GM12878 (cell line): ENCODE measurements at regions of chr6 and their contacts with region 1.

Region 1: DNA sequence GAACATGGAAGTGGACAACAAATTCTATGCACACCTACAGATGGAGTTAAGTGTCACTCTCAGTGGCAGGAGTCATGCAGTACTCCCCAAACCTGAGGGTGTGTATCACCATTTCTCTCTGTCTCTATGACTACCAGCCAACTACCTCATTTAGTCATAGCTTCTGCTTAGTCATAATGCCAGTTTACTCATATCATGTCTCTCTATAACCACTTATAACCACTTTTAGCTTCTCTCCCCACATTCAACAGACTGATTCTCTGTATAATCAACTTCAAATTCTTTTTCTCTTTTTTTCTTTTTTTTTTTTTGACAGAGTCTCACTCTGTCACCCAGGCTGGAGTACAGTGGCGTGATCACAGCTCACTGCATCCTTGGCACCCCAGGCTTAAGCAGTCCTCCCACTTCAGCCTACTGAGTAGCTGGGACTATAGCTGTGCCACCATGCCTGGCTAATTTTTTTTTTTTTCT is 13.8 kb upstream of the GTF3C6 start:
- DNase-seq: peak; percentile 94
- ATAC-seq: peak; percentile 99
- H3K4me3 ChIP-seq: peak overlapping the region; percentile 9; the same call in 1 of the 2 replicates
- H3K27ac ChIP-seq: peak overlapping the region; percentile 22; the same call in 1 of the 2 replicates
- H3K4me1 ChIP-seq: peaks cover 10% of the 10 kb centered on the region
- H3K27me3 ChIP-seq: no peaks in the 10 kb centered on the region
- CTCF ChIP-seq: no peak
- EP300 ChIP-seq: peak; percentile 99
- POLR2A ChIP-seq: no peak
- RAD21 ChIP-seq: no peak

Region 2: DNA sequence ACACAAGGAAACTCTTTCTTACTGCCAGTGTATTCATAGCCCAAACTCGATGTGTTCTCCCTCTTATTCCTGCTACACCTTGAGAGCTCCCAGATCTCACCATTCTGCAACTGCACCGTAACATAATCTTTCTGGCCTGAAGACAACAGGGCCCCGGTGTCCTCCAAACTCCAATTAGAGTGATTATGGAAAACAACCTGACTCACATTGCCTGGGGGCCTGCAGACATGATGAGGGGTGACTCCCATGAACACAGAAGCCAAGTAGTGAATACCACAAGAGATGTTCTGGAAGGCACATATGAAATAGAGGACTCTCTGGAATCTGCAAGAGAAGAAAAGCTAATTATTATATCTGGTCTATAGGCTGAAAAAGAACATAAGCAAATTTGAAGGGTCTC is 488.0 kb before region 1 on chr6:
- CTCF ChIA-PET with region 1: interaction called, 4 read pairs
- POLR2A ChIA-PET with region 1: no interaction called
- RAD21 ChIA-PET with region 1: no interaction called
- SMC1A ChIA-PET with region 1: no interaction called
- in situ Hi-C with region 1: no loop called
- intact Hi-C with region 1: loop called (anchors 5 kb)
- DNase-seq: no peak
- ATAC-seq: no peak
- H3K4me3 ChIP-seq: no peak overlapping the region
- H3K27ac ChIP-seq: no peak overlapping the region
- H3K4me1 ChIP-seq: no peaks in the 10 kb centered on the region
- H3K27me3 ChIP-seq: no peaks in the 10 kb centered on the region; a peak in 1 of 4 replicates
- CTCF ChIP-seq: no peak
- EP300 ChIP-seq: no peak
- POLR2A ChIP-seq: no peak
- RAD21 ChIP-seq: no peak

Region 3: DNA sequence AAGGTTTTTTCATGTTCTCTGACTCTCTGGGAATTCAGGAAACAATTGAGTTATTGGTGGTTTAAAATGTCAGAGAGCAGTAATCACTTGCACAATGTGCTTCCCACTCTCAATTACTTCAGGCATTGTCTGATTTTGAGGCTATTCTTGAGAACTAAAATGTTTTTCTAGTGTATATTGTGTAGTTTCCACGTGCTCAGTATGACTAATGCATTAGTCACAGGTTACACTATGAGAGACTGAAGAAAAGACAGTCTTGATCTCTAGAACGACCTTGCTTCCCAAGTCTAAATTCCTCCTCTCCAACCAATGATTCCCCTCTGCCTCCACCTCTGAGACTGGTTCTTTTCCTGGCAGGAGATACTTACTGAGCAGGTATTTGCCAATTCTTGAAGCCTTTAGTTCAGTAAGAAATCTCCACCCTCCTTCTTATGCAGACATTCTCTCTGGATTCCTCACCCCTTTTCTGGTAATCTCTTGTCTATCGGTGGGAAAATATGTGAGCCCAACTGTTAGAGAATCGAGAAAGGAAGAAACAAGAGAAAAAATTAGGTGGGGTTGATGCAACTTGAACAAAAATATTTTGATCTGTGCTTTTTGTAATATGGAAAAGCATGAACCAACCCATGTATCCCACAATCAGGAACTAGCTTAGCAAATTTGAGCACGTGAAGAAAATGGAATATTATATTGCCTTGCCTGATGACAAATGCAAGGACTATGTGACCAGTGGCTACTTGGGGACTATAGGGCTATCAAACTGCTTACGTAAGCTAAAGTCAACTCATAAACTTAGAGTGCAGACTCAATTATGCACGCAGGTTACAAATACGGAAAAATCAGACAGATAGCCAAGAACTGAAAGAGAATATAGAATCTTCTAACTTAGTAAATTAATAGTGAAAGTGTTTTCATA is 407.2 kb before region 1 on chr6:
- CTCF ChIA-PET with region 1: interaction called, 3 read pairs
- POLR2A ChIA-PET with region 1: interaction called, 3 read pairs
- RAD21 ChIA-PET with region 1: no interaction called
- SMC1A ChIA-PET with region 1: interaction called, 3 read pairs
- in situ Hi-C with region 1: loop called (anchors 5 kb)
- intact Hi-C with region 1: no loop called
- DNase-seq: no peak
- ATAC-seq: peak; percentile 64
- H3K4me3 ChIP-seq: no peak overlapping the region
- H3K27ac ChIP-seq: no peak overlapping the region
- H3K4me1 ChIP-seq: no peaks in the 10 kb centered on the region
- H3K27me3 ChIP-seq: no peaks in the 10 kb centered on the region
- CTCF ChIP-seq: no peak
- EP300 ChIP-seq: no peak
- POLR2A ChIP-seq: no peak
- RAD21 ChIP-seq: no peak

Region 4: GRCh38 chr6:110618591-110619267 is 326.0 kb before region 1 on chr6:
- CTCF ChIA-PET with region 1: interaction called, 13 read pairs
- POLR2A ChIA-PET with region 1: no interaction called
- RAD21 ChIA-PET with region 1: no interaction called
- SMC1A ChIA-PET with region 1: interaction called, 6 read pairs
- in situ Hi-C with region 1: no loop called
- intact Hi-C with region 1: loop called (anchors 10 kb)
- DNase-seq: peak; percentile 11
- ATAC-seq: peak; percentile 71
- H3K4me3 ChIP-seq: no peak overlapping the region
- H3K27ac ChIP-seq: no peak overlapping the region
- H3K4me1 ChIP-seq: peaks cover 11% of the 10 kb centered on the region
- H3K27me3 ChIP-seq: no peaks in the 10 kb centered on the region
- CTCF ChIP-seq: peak in 2 of 3 experiments; percentile 34 to 48; a peak in 4 of 6 replicates
- EP300 ChIP-seq: no peak
- POLR2A ChIP-seq: no peak
- RAD21 ChIP-seq: peak; percentile 47

Region 5: DNA sequence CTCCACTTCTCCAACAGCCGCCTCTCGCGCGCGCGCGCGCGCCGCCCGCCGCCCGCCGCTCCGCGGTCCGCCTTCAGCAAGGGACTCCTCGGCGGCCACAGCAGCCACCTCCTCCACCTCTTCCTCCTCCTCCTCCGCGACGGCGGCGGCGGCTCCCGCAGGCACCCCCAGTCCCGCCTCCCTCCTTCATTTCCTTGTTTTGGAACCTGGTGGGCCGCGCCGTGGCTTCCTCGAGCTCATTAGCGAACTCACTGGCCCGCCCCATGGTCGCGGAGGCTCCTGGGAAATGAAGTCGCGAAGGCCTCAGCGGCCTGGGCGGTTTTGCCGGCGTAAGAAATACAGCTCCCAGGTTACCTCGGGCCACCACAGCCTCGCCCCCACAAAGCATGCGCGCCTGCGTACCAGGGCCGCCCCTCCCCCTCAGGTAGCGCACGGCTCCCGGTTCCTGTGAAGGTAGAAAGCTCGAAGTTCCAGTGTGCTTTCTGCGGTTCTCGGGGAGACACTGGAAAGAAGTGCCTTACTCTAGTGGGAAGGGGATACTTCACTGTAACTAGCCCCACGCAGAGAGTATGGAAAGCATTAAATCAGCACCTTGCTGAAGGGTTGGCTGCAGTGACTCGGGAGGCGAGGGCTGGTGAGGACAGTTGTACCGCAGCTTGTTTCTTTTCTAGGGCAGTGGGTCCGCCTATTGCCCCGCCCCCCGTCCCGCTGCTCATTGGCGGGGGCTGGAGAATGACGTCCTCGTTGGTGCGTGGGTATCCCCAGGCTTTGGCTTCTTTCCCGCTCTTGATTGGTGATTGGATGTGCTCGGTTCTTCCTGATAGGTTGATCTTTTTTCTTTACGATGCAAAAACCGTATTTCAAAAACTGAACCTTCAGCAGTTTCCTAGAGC is 129.3 kb before region 1 on chr6 and contains the start of gene CDK19:
- CTCF ChIA-PET with region 1: interaction called, 4 read pairs
- POLR2A ChIA-PET with region 1: interaction called, 4 read pairs
- RAD21 ChIA-PET with region 1: interaction called, 7 read pairs
- SMC1A ChIA-PET with region 1: interaction called, 5 read pairs
- in situ Hi-C with region 1: no loop called
- intact Hi-C with region 1: loop called (anchors 2 kb)
- DNase-seq: peak; percentile 96
- ATAC-seq: peak; percentile 89
- H3K4me3 ChIP-seq: peak within 1 kb of the TSS; percentile 77
- H3K27ac ChIP-seq: peak within 1 kb of the TSS; percentile 86
- H3K4me1 ChIP-seq: peaks cover 16% of the 10 kb centered on the region
- H3K27me3 ChIP-seq: no peaks in the 10 kb centered on the region
- CTCF ChIP-seq: no peak
- EP300 ChIP-seq: peak in 1 of 2 experiments; percentile 47; a peak in 2 of 4 replicates
- POLR2A ChIP-seq: peak; percentile 94
- RAD21 ChIP-seq: no peak
- polyA plus RNA-seq, gene CDK19: 4.6 to 10.1 TPM

Region 6: DNA sequence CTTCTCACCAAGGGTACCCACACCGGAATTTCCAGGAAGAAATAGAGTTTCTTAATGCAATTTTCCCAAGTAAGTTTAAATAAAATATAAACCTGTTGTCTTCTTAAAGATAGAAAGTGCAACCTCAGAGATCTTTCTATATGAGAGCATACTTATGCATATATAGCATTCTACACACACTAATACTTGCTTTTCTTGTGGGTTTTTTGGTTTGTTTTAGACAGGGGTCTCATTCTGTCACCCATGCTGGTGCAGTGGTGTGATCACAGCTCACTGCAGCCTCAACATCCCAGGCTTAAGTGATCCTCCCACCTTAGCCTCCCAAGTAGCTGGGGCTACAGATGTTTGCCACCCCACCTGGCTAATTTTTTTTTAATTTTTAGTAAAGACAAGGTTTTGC is 54.4 kb before region 1 on chr6:
- CTCF ChIA-PET with region 1: interaction called, 6 read pairs
- POLR2A ChIA-PET with region 1: interaction called, 3 read pairs
- RAD21 ChIA-PET with region 1: interaction called, 14 read pairs
- SMC1A ChIA-PET with region 1: interaction called, 4 read pairs
- in situ Hi-C with region 1: no loop called
- intact Hi-C with region 1: no loop called
- DNase-seq: no peak
- ATAC-seq: no peak
- H3K4me3 ChIP-seq: no peak overlapping the region
- H3K27ac ChIP-seq: no peak overlapping the region
- H3K4me1 ChIP-seq: peaks cover 15% of the 10 kb centered on the region
- H3K27me3 ChIP-seq: no peaks in the 10 kb centered on the region
- CTCF ChIP-seq: no peak
- EP300 ChIP-seq: no peak
- POLR2A ChIP-seq: no peak
- RAD21 ChIP-seq: no peak

Region 7: DNA sequence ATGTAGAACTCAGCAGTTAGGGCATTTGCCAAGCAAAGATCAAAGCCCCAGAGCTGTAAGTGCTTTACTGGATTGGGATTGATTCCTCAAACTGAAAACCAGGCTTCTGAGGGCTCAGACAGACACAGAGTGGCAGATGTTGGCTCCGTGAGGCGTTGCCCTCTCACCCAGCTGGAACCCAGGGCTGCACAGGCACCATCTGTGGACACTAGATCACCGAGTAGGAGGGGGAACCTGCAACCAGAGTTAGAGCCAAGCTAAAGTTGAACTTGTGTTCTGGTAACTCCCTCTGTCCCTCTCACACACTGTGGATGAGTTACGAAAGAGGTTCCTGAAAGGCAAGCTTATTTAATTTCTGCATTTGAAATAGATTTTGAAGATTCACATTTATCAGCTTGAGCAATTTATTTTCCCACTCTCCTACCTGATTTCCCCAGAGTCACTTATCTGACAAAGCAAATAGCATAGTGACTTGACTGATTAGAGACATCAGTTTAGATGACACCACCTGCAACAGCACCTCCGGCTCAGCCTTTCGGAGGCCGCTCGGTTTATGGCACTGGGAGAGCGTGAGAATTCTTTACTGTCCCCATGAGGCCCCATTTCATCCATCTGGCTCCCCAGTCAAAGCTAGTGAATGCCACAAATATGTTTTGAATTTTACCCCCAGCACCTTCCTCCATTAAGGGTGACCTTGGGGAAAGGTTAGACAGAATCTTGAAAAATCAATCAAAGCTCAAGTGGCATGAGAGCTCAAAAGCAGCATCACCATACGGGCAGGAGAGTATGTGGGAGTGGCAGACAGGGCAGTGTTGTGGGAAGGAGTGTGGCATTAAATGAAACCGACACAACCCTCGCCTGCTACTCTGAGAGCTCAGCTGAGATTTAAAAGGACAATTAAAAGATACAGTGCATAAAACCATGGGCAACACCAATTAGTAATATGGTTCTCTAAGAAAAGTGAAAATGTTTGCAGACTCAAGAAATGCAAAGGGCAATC is 85.6 kb after region 1 on chr6:
- CTCF ChIA-PET with region 1: no interaction called
- POLR2A ChIA-PET with region 1: no interaction called
- RAD21 ChIA-PET with region 1: no interaction called
- SMC1A ChIA-PET with region 1: no interaction called
- in situ Hi-C with region 1: no loop called
- intact Hi-C with region 1: no loop called
- DNase-seq: no peak
- ATAC-seq: no peak
- H3K4me3 ChIP-seq: no peak overlapping the region
- H3K27ac ChIP-seq: no peak overlapping the region
- H3K4me1 ChIP-seq: no peaks in the 10 kb centered on the region
- H3K27me3 ChIP-seq: no peaks in the 10 kb centered on the region
- CTCF ChIP-seq: no peak
- EP300 ChIP-seq: no peak
- POLR2A ChIP-seq: no peak
- RAD21 ChIP-seq: no peak